ENCODE measurements at regions of chr5 and their contacts with region 1.

Region 1: DNA sequence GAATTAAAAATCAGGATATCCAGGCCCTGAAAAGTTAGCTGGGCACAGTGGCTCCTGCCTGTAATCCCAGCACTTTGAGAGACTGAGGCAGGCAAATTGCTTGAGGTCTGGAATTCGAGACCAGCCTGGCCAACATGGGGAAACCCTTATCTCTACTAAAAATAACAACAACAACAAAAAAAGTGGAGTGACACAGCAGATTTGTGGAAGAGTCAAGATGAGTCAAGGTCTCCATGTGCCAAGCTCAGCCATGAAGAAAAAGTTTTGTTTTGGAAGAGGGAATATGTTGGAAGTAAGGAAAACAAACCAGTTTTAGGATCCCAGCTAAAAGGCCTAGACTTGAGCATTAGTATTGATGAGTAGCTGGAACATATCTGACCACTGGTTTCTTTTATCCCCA is 14.7 kb downstream of the LRRC70 start:
- DNase-seq: no peak
- ATAC-seq: no peak
- H3K4me3 ChIP-seq: no peak overlapping the region
- H3K4me3 Mint-ChIP-seq: no peak overlapping the region
- H3K27ac ChIP-seq: no peak overlapping the region
- H3K27ac Mint-ChIP-seq: no peak overlapping the region
- H3K4me1 ChIP-seq: no peaks in the 10 kb centered on the region
- H3K4me1 Mint-ChIP-seq: peaks cover 2% of the 10 kb centered on the region
- H3K27me3 ChIP-seq: no peaks in the 10 kb centered on the region
- H3K27me3 Mint-ChIP-seq: no peaks in the 10 kb centered on the region
- CTCF ChIP-seq: no peak

Region 2: DNA sequence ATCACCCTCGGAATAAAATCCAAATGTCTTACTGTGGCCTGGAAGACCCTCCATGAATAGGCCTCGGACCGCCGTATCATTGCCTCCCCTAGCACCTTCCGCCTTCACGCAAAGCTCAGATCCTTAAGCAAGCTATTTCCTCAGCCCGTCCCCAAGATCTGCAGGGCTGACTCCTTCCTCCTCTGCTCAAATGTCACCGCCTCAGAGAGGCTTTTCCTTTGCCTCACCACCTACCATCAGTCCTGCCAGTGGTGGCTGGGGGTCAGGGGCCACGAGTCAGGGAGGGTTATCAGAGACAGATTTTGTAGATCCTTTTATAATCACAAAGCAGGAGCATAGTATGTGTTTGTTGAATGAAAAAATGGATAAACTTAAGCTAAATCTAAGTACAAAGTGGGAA is 361.8 kb before region 1 on chr5:
- CTCF ChIA-PET with region 1: no interaction called
- POLR2A ChIA-PET with region 1: no interaction called
- intact Hi-C with region 1: loop called in 1 of 2 experiments (anchors 10 kb)
- DNase-seq: no peak
- ATAC-seq: no peak
- H3K4me3 ChIP-seq: no peak overlapping the region
- H3K4me3 Mint-ChIP-seq: no peak overlapping the region
- H3K27ac ChIP-seq: no peak overlapping the region
- H3K27ac Mint-ChIP-seq: no peak overlapping the region
- H3K4me1 ChIP-seq: no peaks in the 10 kb centered on the region
- H3K4me1 Mint-ChIP-seq: no peaks in the 10 kb centered on the region
- H3K27me3 ChIP-seq: no peaks in the 10 kb centered on the region
- H3K27me3 Mint-ChIP-seq: no peaks in the 10 kb centered on the region
- CTCF ChIP-seq: no peak

Region 3: DNA sequence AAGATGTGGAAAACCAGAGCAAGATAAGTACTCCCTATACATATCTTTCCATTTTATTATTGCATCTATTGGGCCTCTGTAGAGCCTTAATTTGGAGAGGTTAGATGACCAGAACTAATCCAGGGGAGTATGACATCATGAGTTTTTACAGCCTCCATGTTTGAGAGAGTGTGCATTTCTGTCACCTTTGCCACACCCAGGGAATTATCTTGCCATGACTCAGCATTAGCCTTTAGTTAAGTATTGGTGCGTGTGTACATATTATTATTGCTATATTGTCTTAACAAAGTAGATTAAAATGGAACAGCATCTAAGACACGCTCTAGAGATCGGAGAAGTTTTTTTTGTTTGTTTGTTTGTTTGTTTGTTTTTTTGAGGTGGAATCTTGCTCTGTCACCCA is 217.3 kb before region 1 on chr5:
- CTCF ChIA-PET with region 1: no interaction called
- POLR2A ChIA-PET with region 1: no interaction called
- intact Hi-C with region 1: no loop called
- DNase-seq: no peak
- ATAC-seq: no peak
- H3K4me3 ChIP-seq: no peak overlapping the region
- H3K4me3 Mint-ChIP-seq: no peak overlapping the region
- H3K27ac ChIP-seq: no peak overlapping the region
- H3K27ac Mint-ChIP-seq: no peak overlapping the region
- H3K4me1 ChIP-seq: no peaks in the 10 kb centered on the region
- H3K4me1 Mint-ChIP-seq: no peaks in the 10 kb centered on the region
- H3K27me3 ChIP-seq: no peaks in the 10 kb centered on the region
- H3K27me3 Mint-ChIP-seq: no peaks in the 10 kb centered on the region
- CTCF ChIP-seq: no peak

Region 4: GRCh38 chr5:62506659-62507460 is 86.5 kb before region 1 on chr5:
- CTCF ChIA-PET with region 1: no interaction called
- POLR2A ChIA-PET with region 1: no interaction called
- intact Hi-C with region 1: no loop called
- DNase-seq: no peak
- ATAC-seq: no peak
- H3K4me3 ChIP-seq: no peak overlapping the region
- H3K4me3 Mint-ChIP-seq: no peak overlapping the region
- H3K27ac ChIP-seq: no peak overlapping the region
- H3K27ac Mint-ChIP-seq: no peak overlapping the region
- H3K4me1 ChIP-seq: no peaks in the 10 kb centered on the region
- H3K4me1 Mint-ChIP-seq: no peaks in the 10 kb centered on the region
- H3K27me3 ChIP-seq: no peaks in the 10 kb centered on the region
- H3K27me3 Mint-ChIP-seq: no peaks in the 10 kb centered on the region
- CTCF ChIP-seq: no peak

Region 5: GRCh38 chr5:62550103-62550502 is 43.2 kb before region 1 on chr5:
- CTCF ChIA-PET with region 1: no interaction called
- POLR2A ChIA-PET with region 1: no interaction called
- intact Hi-C with region 1: loop called in 1 of 2 experiments (anchors 5 kb)
- DNase-seq: no peak
- ATAC-seq: no peak
- H3K4me3 ChIP-seq: no peak overlapping the region
- H3K4me3 Mint-ChIP-seq: no peak overlapping the region
- H3K27ac ChIP-seq: no peak overlapping the region
- H3K27ac Mint-ChIP-seq: no peak overlapping the region
- H3K4me1 ChIP-seq: no peaks in the 10 kb centered on the region
- H3K4me1 Mint-ChIP-seq: no peaks in the 10 kb centered on the region
- H3K27me3 ChIP-seq: no peaks in the 10 kb centered on the region
- H3K27me3 Mint-ChIP-seq: no peaks in the 10 kb centered on the region
- CTCF ChIP-seq: no peak